IMR-90 (cell line): ENCODE measurements at regions of chr11 and their contacts with region 1.

Region 1: DNA sequence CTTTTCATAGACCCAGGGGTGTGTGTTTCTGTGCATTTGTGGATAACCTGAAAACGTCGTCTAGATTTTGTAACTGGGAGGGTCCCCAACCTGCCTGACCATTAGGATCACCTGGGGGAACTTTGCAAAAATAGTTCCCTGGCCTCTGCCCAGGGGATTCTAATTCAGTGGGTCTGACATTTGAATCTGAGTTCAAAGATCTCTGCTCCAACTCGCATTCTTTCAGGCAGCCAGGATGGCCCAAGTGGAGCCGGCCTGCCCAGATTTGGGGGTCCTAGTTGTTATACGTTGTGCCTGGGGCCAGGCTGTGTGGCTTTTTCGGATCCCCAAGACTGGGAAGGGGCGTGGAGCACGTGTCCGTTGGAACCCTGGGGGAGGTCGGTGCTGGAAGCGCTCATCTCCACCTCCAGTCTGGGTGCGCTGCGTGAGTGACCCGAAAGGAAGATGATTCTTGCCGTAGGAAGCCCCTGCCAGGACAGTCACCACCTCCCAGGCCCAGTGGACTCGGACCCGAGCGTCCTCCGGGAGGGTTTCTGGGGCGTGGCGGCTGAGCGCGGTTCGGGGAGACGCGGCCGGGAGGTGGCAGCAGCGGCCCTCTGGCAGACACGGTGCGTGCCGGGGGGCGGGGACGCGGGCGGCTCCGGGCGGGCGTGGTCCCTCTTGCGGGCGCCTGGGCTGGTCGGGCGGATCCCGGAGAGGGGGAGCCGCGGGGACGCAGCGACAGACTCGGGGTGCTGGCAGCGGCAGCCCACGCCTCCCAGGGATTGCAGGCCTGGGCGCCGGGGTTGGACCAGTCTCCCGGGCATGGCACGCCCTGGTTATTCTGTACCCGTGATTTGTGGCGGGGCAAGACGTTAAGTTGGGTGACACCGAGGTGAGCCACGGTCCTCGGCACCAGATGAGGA is 29.2 kb upstream of the PLET1 start:
- DNase-seq: peak; percentile 35
- ATAC-seq: peak; percentile 91
- H3K4me3 ChIP-seq: peak overlapping the region; percentile 55
- H3K27ac ChIP-seq: peak overlapping the region; percentile 45
- H3K4me1 ChIP-seq: peaks cover 10% of the 10 kb centered on the region
- H3K27me3 ChIP-seq: no peaks in the 10 kb centered on the region
- CTCF ChIP-seq: peak; percentile 89
- POLR2A ChIP-seq: no peak
- RAD21 ChIP-seq: peak; percentile 94

Region 2: DNA sequence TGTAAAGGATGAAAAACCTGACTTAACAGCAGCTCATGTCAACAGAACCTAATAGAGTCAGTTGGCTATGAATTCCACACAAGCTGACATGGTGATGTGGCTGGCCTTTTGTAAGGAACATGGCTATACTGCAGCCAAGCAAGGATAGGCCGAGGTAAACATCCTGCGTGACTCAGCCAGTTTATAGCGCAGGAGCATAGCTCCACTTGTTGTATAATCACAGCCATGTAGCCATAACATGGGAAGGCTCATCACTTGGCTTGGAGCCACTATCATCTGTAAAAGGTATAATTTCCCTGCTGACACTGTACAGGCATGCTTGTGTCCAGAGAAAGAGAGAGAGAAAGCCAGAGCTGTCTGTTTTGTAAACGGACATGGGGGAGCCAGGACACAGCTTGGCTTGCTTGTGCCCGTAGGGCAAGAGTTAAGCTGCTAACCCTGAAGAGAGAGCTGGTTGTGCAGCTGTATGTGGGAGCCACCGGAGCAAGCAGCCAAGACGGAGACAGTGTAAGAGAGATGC is 75.2 kb after region 1 on chr11:
- CTCF ChIA-PET with region 1: interaction called, 3 read pairs
- POLR2A ChIA-PET with region 1: no interaction called
- dilution Hi-C with region 1: no loop called
- in situ Hi-C with region 1: no loop called
- intact Hi-C with region 1: loop called (anchors 2 kb)
- DNase-seq: peak; percentile 99
- ATAC-seq: peak; percentile 89
- H3K4me3 ChIP-seq: no peak overlapping the region
- H3K27ac ChIP-seq: peak overlapping the region; percentile 98
- H3K4me1 ChIP-seq: peaks cover 31% of the 10 kb centered on the region
- H3K27me3 ChIP-seq: no peaks in the 10 kb centered on the region
- CTCF ChIP-seq: no peak
- POLR2A ChIP-seq: 0 out of 2 replicates have a peak, but pooled peaks have one; percentile 26
- RAD21 ChIP-seq: no peak

Region 3: DNA sequence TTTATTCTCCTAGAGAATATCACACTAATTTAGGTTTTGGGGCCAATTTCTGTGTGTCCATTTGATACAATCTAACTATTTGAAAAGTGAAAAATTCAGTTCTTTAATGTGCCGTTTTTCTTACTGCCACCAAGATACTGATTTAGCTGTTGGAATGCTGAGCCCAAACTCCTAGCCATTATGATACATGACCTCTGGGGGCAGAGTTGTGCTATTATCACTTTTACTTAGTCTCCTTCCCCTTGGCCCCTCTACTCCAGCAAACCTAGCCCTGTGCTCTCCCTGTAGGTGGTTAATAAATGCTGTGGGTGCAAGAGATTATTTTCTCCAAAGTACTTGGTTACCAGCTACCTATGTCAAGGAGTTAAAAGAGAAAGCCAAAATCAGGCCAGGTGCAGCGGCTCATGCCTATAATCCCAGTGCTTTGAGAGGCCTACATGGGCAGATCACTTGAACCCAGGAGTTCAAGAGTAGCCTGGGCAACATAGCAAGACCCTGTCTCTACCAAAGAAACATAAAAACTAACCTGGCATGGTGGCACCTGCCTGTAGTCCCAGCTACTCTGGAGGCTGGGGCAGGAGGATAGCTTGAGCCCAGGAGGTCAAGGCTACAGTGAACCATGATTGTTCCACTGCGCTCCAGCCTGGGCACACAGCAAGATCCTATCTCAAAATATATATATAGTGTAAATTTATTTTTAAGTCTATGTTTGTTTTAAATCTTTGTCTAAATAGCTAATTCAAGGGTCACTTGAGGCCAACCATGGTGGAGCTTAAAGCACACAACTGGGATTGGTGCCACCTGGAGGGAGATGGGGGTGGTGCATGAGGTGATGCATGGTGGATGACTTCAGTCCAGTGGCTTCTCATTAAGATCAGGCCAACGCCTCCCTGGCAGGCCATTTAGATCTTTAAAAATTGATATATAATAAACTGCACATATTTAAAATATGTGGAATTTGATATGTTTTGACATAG is 164.0 kb after region 1 on chr11:
- CTCF ChIA-PET with region 1: no interaction called
- POLR2A ChIA-PET with region 1: no interaction called
- dilution Hi-C with region 1: no loop called
- in situ Hi-C with region 1: no loop called
- intact Hi-C with region 1: loop called (anchors 5 kb)
- DNase-seq: peak; percentile 12
- ATAC-seq: no peak
- H3K4me3 ChIP-seq: no peak overlapping the region
- H3K27ac ChIP-seq: no peak overlapping the region
- H3K4me1 ChIP-seq: no peaks in the 10 kb centered on the region
- H3K27me3 ChIP-seq: 0 out of 2 replicates have a peak, but pooled peaks cover under 1% of the 10 kb centered on the region
- CTCF ChIP-seq: peak; percentile 33; the same call in 1 of the 2 replicates
- POLR2A ChIP-seq: no peak
- RAD21 ChIP-seq: peak; percentile 42

Region 4: GRCh38 chr11:112555491-112556364 is 265.9 kb after region 1 on chr11:
- CTCF ChIA-PET with region 1: interaction called, 3 read pairs
- POLR2A ChIA-PET with region 1: no interaction called
- dilution Hi-C with region 1: no loop called
- in situ Hi-C with region 1: loop called (anchors 5 kb)
- intact Hi-C with region 1: loop called (anchors 1 kb)
- DNase-seq: peak; percentile 35
- ATAC-seq: peak; percentile 86
- H3K4me3 ChIP-seq: no peak overlapping the region
- H3K27ac ChIP-seq: no peak overlapping the region
- H3K4me1 ChIP-seq: no peaks in the 10 kb centered on the region
- H3K27me3 ChIP-seq: peaks cover 10% of the 10 kb centered on the region
- CTCF ChIP-seq: peak; percentile 70
- POLR2A ChIP-seq: no peak
- RAD21 ChIP-seq: peak; percentile 64

Region 5: GRCh38 chr11:112795142-112795815 is 505.4 kb after region 1 on chr11:
- CTCF ChIA-PET with region 1: no interaction called
- POLR2A ChIA-PET with region 1: no interaction called
- dilution Hi-C with region 1: no loop called
- in situ Hi-C with region 1: no loop called
- intact Hi-C with region 1: loop called (anchors 1 kb)
- DNase-seq: peak; percentile 31
- ATAC-seq: 0 out of 2 replicates have a peak, but pooled peaks have one; percentile 48
- H3K4me3 ChIP-seq: no peak overlapping the region
- H3K27ac ChIP-seq: no peak overlapping the region
- H3K4me1 ChIP-seq: no peaks in the 10 kb centered on the region
- H3K27me3 ChIP-seq: no peaks in the 10 kb centered on the region
- CTCF ChIP-seq: peak; percentile 51
- POLR2A ChIP-seq: no peak
- RAD21 ChIP-seq: peak; percentile 39

Region 6: DNA sequence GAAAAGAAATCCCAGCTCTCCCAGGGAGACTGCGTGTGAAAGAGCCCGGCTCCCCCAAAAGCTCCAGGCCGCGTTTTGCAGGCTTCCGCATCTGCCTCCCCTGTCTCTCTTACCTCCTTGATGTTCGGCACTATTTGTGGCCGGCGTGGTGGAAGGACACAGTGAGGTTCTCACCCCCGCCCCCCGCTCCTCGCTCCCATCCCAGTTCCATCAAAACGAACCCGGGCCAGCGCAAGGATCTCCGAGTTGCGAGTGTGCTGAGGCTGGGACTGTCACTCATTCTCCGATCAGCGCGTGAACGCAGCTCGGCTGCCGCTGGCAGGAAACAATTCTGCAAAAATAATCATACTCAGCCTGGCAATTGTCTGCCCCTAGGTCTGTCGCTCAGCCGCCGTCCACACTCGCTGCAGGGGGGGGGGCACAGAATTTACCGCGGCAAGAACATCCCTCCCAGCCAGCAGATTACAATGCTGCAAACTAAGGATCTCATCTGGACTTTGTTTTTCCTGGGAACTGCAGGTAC is 671.4 kb after region 1 on chr11 and contains the start of gene NCAM1:
- CTCF ChIA-PET with region 1: no interaction called
- POLR2A ChIA-PET with region 1: no interaction called
- dilution Hi-C with region 1: no loop called
- in situ Hi-C with region 1: no loop called
- intact Hi-C with region 1: loop called (anchors 10 kb)
- DNase-seq: peak; percentile 23
- ATAC-seq: peak; percentile 32; the same call in 1 of the 2 replicates
- H3K4me3 ChIP-seq: peak within 1 kb of the TSS; percentile 33; the same call in 1 of the 2 replicates
- H3K27ac ChIP-seq: no peak within 1 kb of the TSS
- H3K4me1 ChIP-seq: no peaks in the 10 kb centered on the region; the same call in 1 of the 2 replicates
- H3K27me3 ChIP-seq: peaks cover 32% of the 10 kb centered on the region
- CTCF ChIP-seq: no peak
- POLR2A ChIP-seq: no peak
- RAD21 ChIP-seq: no peak
- total RNA-seq, gene NCAM1: 0.18 TPM in 1 of 2 replicates, not detected in the other

Region 7: GRCh38 chr11:113289431-113290187 is 999.8 kb after region 1 on chr11:
- CTCF ChIA-PET with region 1: interaction called, 5 read pairs
- POLR2A ChIA-PET with region 1: no interaction called
- dilution Hi-C with region 1: no loop called
- in situ Hi-C with region 1: loop called (anchors 10 kb)
- intact Hi-C with region 1: loop called (anchors 1 kb)
- DNase-seq: peak; percentile 38
- ATAC-seq: peak; percentile 91
- H3K4me3 ChIP-seq: no peak overlapping the region
- H3K27ac ChIP-seq: no peak overlapping the region
- H3K4me1 ChIP-seq: peaks cover 6% of the 10 kb centered on the region; the same call in 1 of the 2 replicates
- H3K27me3 ChIP-seq: peaks cover 8% of the 10 kb centered on the region; the same call in 1 of the 2 replicates
- CTCF ChIP-seq: peak; percentile 89
- POLR2A ChIP-seq: no peak
- RAD21 ChIP-seq: peak; percentile 92